Activated CD8-positive, alpha-beta T cell treated with anti-CD3 and anti-CD28 coated beads, Interleukin-2, amount 10 ng/mL, durations not matched to agents 7 days and 5 days (primary cell): ENCODE measurements at regions of chr16 and their contacts with region 1.

Region 1: GRCh38 chr16:19583665-19584300 is 28.3 kb downstream of the VPS35L start:
- DNase-seq: peak; percentile 36
- ATAC-seq: peak; percentile 64
- H3K4me3 Mint-ChIP-seq: no peak overlapping the region
- H3K27ac Mint-ChIP-seq: no peak overlapping the region
- H3K4me1 Mint-ChIP-seq: no peaks in the 10 kb centered on the region
- H3K27me3 Mint-ChIP-seq: no peaks in the 10 kb centered on the region

Region 2: DNA sequence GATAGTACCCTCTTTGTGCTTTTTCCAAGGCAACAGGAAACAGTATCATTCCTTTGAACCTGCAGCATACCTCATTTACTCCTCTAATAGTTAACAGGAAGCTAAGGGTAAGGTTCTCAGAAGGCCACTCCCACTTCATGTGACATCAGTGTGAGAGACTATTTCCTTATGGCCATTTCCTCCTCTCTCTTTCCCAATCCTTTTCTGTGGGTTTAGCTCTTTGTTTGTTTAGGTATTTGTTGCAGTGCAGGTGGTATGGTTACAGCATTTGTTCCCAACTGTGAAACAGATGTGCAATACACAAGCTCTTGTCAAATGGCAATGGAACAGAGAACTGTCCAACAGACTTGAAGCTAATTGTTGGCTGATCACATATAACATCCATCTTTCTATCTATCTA is 151.4 kb before region 1 on chr16:
- CTCF ChIA-PET with region 1: no interaction called
- POLR2A ChIA-PET with region 1: no interaction called
- DNase-seq: no peak
- ATAC-seq: no peak
- H3K4me3 Mint-ChIP-seq: no peak overlapping the region
- H3K27ac Mint-ChIP-seq: no peak overlapping the region
- H3K4me1 Mint-ChIP-seq: peaks cover 7% of the 10 kb centered on the region
- H3K27me3 Mint-ChIP-seq: no peaks in the 10 kb centered on the region

Region 3: GRCh38 chr16:19595043-19595767 is 11.4 kb after region 1 on chr16:
- CTCF ChIA-PET with region 1: interaction called, 15 read pairs
- POLR2A ChIA-PET with region 1: no interaction called
- DNase-seq: no peak
- ATAC-seq: no peak
- H3K4me3 Mint-ChIP-seq: no peak overlapping the region
- H3K27ac Mint-ChIP-seq: no peak overlapping the region
- H3K4me1 Mint-ChIP-seq: no peaks in the 10 kb centered on the region
- H3K27me3 Mint-ChIP-seq: no peaks in the 10 kb centered on the region

Region 4: GRCh38 chr16:19601083-19601976 is 17.5 kb after region 1 on chr16:
- CTCF ChIA-PET with region 1: interaction called, 15 read pairs
- POLR2A ChIA-PET with region 1: no interaction called
- DNase-seq: peak; percentile 54
- ATAC-seq: no peak
- H3K4me3 Mint-ChIP-seq: no peak overlapping the region
- H3K27ac Mint-ChIP-seq: no peak overlapping the region
- H3K4me1 Mint-ChIP-seq: no peaks in the 10 kb centered on the region
- H3K27me3 Mint-ChIP-seq: no peaks in the 10 kb centered on the region

Region 5: GRCh38 chr16:19632916-19633315 is 49.1 kb after region 1 on chr16:
- CTCF ChIA-PET with region 1: no interaction called
- POLR2A ChIA-PET with region 1: no interaction called
- DNase-seq: no peak
- ATAC-seq: no peak
- H3K4me3 Mint-ChIP-seq: no peak overlapping the region
- H3K27ac Mint-ChIP-seq: no peak overlapping the region
- H3K4me1 Mint-ChIP-seq: no peaks in the 10 kb centered on the region
- H3K27me3 Mint-ChIP-seq: no peaks in the 10 kb centered on the region